ENCODE measurements at regions of chr1 and their contacts with region 1.

Region 1: GRCh38 chr1:39026051-39026865 is at the start of gene NDUFS5:
- DNase-seq: peak; percentile 65
- ATAC-seq: peak; percentile 97
- H3K4me3 ChIP-seq: peak within 1 kb of the TSS; percentile 91
- H3K27ac ChIP-seq: peak within 1 kb of the TSS; percentile 90
- H3K4me1 ChIP-seq: peaks cover 7% of the 10 kb centered on the region
- H3K27me3 ChIP-seq: no peaks in the 10 kb centered on the region
- CTCF ChIP-seq: no peak
- EP300 ChIP-seq: 0 out of 4 replicates have a peak, but pooled peaks of 1 of the 2 experiments have one; percentile 48
- POLR2A ChIP-seq: peak; percentile 94
- RAD21 ChIP-seq: no peak
- polyA plus RNA-seq, gene NDUFS5: 1,576 to 1,578 TPM

Region 2: GRCh38 chr1:38997034-38997900 is 29.0 kb before region 1 on chr1:
- CTCF ChIA-PET with region 1: interaction called, 3 read pairs
- POLR2A ChIA-PET with region 1: interaction called, 11 read pairs
- RAD21 ChIA-PET with region 1: interaction called, 4 read pairs
- SMC1A ChIA-PET with region 1: interaction called, 10 read pairs
- in situ Hi-C with region 1: no loop called
- intact Hi-C with region 1: no loop called
- DNase-seq: no peak
- ATAC-seq: no peak
- H3K4me3 ChIP-seq: no peak overlapping the region; the same call in 1 of the 2 replicates
- H3K27ac ChIP-seq: no peak overlapping the region
- H3K4me1 ChIP-seq: no peaks in the 10 kb centered on the region
- H3K27me3 ChIP-seq: no peaks in the 10 kb centered on the region
- CTCF ChIP-seq: no peak
- EP300 ChIP-seq: no peak
- POLR2A ChIP-seq: no peak
- RAD21 ChIP-seq: no peak

Region 3: DNA sequence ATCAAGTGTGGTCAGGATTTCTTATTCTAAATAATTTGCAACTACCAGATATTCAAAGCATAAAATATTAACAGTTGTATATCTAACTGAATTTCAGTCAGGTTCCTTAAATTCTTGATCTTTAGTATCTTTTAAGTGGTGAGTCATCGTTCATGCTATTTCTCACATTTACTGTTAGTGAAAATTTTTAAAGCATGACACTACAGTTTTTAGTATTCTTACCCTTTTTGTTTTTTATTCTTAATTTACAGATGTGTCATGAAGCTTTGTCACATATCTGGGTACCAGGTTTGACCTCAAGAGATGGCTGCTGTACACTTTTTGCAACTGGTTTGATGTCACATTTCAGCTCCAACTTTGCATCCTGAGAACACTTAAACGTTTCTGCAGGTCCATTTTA is 22.5 kb before region 1 on chr1:
- CTCF ChIA-PET with region 1: no interaction called
- POLR2A ChIA-PET with region 1: interaction called, 10 read pairs
- RAD21 ChIA-PET with region 1: interaction called, 3 read pairs
- SMC1A ChIA-PET with region 1: interaction called, 14 read pairs
- in situ Hi-C with region 1: no loop called
- intact Hi-C with region 1: no loop called
- DNase-seq: no peak
- ATAC-seq: no peak
- H3K4me3 ChIP-seq: no peak overlapping the region
- H3K27ac ChIP-seq: no peak overlapping the region
- H3K4me1 ChIP-seq: no peaks in the 10 kb centered on the region
- H3K27me3 ChIP-seq: no peaks in the 10 kb centered on the region
- CTCF ChIP-seq: no peak
- EP300 ChIP-seq: no peak
- POLR2A ChIP-seq: no peak
- RAD21 ChIP-seq: no peak

Region 4: GRCh38 chr1:39250460-39251240 is 224.4 kb after region 1 on chr1:
- CTCF ChIA-PET with region 1: no interaction called
- POLR2A ChIA-PET with region 1: no interaction called
- RAD21 ChIA-PET with region 1: no interaction called
- SMC1A ChIA-PET with region 1: no interaction called
- in situ Hi-C with region 1: no loop called
- intact Hi-C with region 1: no loop called
- DNase-seq: no peak
- ATAC-seq: no peak
- H3K4me3 ChIP-seq: no peak overlapping the region
- H3K27ac ChIP-seq: no peak overlapping the region
- H3K4me1 ChIP-seq: peaks cover 2% of the 10 kb centered on the region; the same call in 1 of the 2 replicates
- H3K27me3 ChIP-seq: no peaks in the 10 kb centered on the region
- CTCF ChIP-seq: no peak
- EP300 ChIP-seq: no peak
- POLR2A ChIP-seq: no peak
- RAD21 ChIP-seq: no peak